ENCODE measurements at regions of chr11 and their contacts with region 1.

Region 1: DNA sequence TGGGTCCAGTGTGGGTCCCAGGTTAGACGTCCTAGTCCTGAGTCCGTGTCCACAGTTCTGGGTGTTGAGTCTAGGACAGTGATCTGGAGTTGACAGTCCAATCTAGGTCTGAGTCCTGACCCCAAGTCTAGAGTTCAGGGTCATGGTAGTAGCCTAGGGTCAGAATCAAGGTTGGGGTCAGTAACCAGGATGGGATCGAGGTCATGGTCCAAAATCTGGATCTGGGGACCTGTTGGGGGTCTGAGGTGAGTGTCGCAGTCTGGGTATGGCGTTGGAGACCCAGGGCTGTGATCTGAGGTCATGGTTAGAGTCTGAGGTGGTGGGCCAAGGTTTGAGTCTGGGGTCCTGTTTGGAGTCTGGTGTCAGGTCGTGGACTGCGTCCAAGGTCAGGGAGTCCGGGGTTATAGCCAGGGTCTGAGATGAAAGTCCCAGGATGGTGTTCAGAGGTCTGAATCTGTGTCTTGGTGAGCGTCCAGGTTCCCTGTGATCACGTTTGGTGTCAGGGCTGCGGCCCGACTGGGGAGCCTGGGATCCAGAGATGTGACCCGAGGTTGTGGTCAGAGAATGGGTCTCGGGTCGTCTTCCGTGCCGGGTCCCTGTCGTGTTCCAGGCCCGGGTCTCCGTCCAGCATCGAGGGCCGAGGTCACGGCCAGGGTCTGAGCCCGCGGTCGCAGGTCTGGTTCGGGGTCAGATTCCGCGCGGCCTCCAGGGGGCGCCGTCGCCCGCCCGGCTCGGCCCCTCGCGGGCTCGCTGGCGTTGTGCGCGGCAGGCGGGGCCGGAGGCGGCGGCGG is 445 bp upstream of the GRK2 start:
- H3K4me3 Mint-ChIP-seq: peak overlapping the region; percentile 64
- H3K27ac Mint-ChIP-seq: peak overlapping the region; percentile 98
- H3K4me1 Mint-ChIP-seq: peaks cover 88% of the 10 kb centered on the region
- H3K27me3 Mint-ChIP-seq: peaks cover 6% of the 10 kb centered on the region

Region 2: GRCh38 chr11:67277231-67277961 is 11.6 kb after region 1 on chr11:
- intact Hi-C with region 1: loop called (anchors 1 kb)
- H3K4me3 Mint-ChIP-seq: peak overlapping the region; percentile 72
- H3K27ac Mint-ChIP-seq: peak overlapping the region; percentile 98
- H3K4me1 Mint-ChIP-seq: peaks cover 100% of the 10 kb centered on the region
- H3K27me3 Mint-ChIP-seq: no peaks in the 10 kb centered on the region

Region 3: DNA sequence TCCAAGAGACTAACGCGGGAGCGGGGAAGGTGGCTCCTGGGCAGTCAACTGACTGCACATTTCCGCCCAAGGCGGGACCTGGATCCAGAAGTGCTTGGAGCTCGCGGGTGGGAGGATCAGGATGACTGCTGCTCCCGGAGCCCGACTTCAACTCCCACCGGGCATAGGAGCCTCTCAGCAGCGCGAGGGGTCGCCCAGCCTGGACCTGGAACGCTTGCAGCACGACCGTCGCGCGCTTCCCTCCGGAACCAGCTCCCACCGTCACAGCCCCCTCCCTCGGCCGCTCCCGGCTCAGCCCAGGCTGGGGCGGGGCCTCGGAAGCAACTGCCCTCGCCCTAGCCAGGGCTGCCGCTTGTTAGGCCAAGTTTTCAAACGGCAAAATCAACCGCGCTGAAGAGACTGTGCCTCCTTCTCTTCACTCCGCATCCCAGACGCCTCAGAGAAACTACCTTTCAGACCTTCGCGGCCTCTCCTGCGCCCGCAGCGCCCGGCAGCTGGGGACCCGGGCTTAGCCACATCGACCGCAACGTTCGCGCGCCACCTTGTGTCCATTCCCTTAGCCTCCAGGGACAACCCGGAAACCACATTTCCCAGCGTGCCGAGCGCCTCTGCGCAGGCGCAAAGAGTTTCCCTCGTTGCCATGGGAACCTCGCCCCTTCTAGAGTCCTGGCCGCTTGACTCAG is 51.5 kb after region 1 on chr11:
- intact Hi-C with region 1: loop called (anchors 1 kb)
- H3K4me3 Mint-ChIP-seq: peak overlapping the region; percentile 92
- H3K27ac Mint-ChIP-seq: peak overlapping the region; percentile 96
- H3K4me1 Mint-ChIP-seq: peaks cover 27% of the 10 kb centered on the region
- H3K27me3 Mint-ChIP-seq: peaks cover 10% of the 10 kb centered on the region

Region 4: GRCh38 chr11:67382276-67383136 is 116.7 kb after region 1 on chr11:
- intact Hi-C with region 1: loop called (anchors 10 kb)
- H3K4me3 Mint-ChIP-seq: no peak overlapping the region
- H3K27ac Mint-ChIP-seq: peak overlapping the region; percentile 28
- H3K4me1 Mint-ChIP-seq: peaks cover 55% of the 10 kb centered on the region
- H3K27me3 Mint-ChIP-seq: peaks cover 5% of the 10 kb centered on the region